Left cardiac atrium (tissue), 4 donors: ENCODE measurements at regions of chr2 and their contacts with region 1.

Region 1: GRCh38 chr2:99559075-99559662 is 69.4 kb upstream of the REV1 start:
- DNase-seq: peak; percentile 87
- ATAC-seq: peak; percentile 96 to 97

Region 2: DNA sequence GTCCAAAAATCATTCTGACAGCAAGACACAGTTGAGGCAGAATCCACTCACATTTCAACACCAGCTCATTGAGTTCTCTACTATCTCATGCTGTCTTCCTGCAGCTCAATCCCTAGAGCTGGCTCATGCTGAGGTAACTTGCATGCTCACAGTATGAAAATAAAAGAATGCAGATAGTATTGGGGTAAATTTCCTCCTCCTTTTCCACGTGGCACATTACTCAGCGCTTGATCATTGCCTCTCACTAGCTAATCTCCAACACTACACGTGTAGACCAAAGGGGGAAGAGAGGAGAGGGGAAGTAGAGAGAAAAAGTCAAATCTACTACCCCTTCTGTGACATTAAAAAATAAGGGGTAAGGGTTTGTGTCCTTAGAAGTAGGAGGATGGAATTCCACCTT is 282.6 kb after region 1 on chr2:
- intact Hi-C with region 1: no loop called
- DNase-seq: no peak
- ATAC-seq: peak in 1 of 2 donors; percentile 61

Region 3: DNA sequence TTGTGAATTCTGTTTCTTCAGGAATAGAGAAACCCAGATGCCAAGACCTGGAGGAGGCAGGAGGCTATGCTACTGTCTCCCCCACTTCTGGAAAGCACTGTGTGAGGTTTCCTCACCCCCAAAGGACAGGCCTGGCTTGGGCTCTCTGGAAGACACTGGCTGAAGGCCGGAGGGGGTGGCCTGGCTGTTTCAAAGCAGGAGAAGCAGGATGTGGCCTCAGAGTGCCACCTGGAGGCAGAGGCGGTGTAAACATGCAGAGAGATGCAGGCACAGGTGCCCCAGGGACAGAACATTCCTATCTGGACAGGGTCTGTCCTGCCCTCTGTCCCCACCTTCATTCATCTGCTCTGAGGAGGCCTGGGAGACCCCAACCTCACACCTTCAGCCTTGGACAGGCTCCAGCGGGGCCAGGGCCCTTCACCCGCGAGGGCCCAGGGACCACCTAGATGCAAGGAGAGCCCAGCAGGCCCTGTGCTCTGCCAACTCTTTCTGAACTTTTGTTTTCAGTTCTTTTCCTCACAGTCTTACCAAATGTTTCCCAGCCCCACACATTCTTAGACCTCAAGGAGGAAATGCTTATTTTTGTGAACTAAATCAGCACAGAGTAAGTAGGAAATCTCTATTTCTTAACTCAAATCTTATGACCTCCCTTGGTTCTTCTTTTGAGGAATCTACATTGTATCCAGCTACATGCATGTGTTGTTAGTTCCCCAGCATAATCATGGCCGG is 683.9 kb after region 1 on chr2:
- intact Hi-C with region 1: loop called in 1 of 2 experiments (anchors 2 kb)
- DNase-seq: peak; percentile 69
- ATAC-seq: peak; percentile 80 to 88

Region 4: DNA sequence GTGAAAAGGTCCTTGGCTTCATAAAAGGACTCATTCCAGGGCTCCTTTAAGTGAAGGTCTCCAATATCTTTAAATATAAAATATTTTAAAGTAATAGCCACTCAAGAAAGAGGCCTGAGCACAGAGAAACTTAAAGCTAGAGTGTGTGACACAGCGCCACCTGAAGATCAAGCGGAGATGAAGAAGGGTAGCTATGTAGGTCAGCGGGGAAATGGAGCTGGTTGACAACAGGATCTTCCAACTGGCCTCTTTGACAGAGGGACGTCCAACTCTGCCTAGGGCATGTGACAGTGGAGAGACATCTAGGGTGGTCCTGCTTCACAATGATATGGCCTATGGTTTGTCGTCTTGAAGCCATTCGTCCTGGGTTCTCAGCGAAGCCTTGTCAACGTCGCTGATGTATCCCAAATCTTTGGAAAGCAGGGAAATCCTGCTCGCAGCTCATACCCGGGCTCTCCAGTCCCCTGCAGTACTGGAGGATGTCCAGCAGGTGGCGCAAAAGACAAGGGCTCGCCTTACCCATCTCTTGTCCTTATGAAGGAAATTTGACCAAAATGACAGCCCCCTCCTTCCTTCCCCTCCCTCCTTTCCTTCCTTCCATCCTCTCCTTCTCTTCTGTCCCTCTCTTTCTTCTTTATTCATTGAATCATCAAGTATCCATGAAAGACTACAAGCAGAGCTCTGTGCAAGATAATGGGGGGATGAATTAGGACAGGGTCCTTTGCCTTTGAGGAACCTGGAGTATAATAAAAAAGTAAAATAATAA is 703.6 kb after region 1 on chr2:
- intact Hi-C with region 1: loop called in 1 of 2 experiments (anchors 5 kb)
- DNase-seq: peak; percentile 71
- ATAC-seq: peak; percentile 49 to 69